ENCODE measurements at regions of chr6 and their contacts with region 1.

Region 1: GRCh38 chr6:110389689-110390382 is 25.5 kb downstream of the DDO start:
- DNase-seq: no peak
- ATAC-seq: peak in 1 of 2 donors; percentile 31

Region 2: GRCh38 chr6:109705258-109705657 is 684.6 kb before region 1 on chr6:
- intact Hi-C with region 1: loop called in 1 of 2 experiments (anchors 2 kb)
- DNase-seq: peak; percentile 78
- ATAC-seq: peak; percentile 94 to 95

Region 3: DNA sequence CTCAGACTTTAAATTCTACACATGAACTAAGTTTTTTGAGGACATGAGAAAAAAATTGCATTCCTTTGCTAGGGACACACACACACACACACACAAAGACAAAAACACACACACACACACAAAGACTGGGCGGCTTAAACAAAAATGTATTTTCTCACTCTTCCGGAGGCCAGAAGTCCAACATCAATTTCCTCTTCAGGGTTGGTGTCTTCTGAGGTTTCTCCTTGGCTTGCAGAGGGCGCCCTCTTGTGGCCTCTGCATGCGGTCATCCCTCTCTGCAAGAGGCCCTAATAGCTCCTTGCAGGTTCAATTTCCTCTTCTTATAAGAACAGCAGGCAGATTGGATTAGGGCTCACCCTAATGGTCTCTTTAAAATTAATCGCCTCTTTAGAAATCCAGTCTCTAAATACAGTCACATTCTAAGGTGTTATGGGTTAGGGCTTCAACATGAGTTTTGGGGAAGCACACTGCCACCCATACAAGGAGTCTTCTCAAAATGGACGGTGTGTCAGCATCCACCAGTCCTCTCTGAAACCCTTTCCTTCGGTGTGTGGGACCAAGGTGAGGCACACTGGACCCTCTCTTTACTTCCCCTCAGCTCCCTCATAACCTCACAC is 350.4 kb before region 1 on chr6:
- intact Hi-C with region 1: loop called in 1 of 2 experiments (anchors 5 kb)
- DNase-seq: peak; percentile 88
- ATAC-seq: peak; percentile 95

Region 4: DNA sequence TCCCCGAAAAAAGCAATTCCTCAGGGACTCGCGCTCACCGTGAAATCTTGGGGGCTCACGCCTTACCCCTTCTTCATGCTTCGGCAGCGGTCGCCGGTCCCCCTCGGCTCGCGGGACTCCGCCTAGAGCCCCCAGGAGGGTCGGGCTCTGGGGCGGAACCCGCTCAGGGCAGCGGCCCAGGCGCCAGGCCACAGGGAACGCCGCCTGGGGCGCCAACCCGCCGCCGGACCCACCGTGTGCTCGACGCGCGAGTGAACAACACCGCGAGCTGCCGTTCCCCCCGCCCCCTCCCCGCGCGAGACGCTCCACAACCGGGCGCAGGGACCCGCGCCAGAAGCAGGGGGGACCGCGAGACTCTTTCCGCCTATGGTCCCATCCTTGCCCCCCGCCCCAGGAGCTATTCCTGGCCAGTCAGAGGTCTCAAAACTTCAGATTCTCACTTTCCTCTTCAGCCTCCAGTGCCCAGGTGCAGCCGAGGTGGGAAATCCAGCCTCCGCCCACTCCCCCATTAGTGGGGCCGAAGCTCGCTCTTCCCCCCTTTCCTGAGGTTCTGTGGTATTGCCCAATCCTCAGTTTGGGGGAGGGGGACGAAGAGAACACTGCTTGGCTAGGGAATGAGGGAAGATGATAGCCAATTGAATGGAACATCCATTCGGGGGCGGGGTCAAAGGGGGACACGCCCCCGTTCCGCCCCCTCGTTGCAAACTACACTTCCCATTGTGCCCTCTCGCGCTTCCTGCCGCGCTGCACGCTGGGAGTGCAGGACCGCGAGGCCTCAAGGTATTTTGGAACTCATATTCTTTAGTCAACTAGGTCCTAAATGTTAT is 210.2 kb before region 1 on chr6 and contains the start of gene WASF1:
- intact Hi-C with region 1: loop called in 1 of 2 experiments (anchors 2 kb)
- DNase-seq: peak; percentile 94
- ATAC-seq: peak; percentile 98
- total RNA-seq, gene WASF1: 3.0 to 3.2 TPM

Measured in left cardiac atrium (tissue), 4 donors.